ENCODE measurements at regions of chr11 and their contacts with region 1.

Region 1: DNA sequence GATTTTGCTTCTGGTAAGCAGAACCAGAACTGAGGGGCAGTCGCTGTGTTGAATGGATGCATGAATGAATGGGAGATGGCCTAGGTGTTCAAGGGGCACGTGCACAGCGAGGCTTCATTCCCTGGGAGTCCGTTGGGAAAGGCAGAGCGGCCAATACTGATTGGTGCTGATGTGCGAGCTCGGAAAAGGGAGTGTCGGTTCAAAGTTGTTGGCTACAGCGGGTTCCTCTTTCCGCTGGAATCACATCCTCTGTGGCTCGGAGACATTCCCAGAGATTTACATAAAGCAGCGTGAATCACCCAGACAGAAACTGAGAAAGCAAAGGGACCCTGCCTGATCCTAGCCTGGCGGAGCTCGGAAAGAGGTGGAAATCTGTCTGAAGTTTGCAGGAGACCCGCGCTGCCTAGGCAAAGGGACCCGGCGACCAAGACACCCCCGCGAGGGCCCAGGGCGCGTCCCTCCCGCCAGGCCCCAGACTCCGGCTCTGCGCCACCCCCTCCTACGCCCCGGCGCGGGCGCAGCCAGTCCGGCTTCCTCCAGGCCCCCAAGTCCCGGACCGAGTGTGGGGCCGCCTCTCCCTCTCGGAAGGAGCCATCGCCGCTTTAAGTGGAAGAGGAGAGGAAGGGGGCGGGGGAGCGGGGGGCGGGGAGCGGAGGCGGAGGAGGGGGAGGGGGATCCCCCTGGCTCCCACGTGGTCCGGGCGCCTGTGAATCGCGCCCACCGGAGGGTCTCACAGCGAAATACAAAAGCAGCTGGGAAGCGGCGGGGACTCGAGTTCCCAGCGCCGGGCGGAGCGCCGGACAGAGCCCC is at the start of gene FJX1:
- DNase-seq: no peak
- ATAC-seq: peak; percentile 36
- H3K4me3 ChIP-seq: peak within 1 kb of the TSS; percentile 56
- H3K27ac ChIP-seq: no peak within 1 kb of the TSS; the same call in 1 of the 2 replicates
- H3K4me1 ChIP-seq: peaks cover 8% of the 10 kb centered on the region; the same call in 1 of the 2 replicates
- H3K27me3 ChIP-seq: no peaks in the 10 kb centered on the region; a peak in 2 of 4 replicates
- CTCF ChIP-seq: no peak
- EP300 ChIP-seq: no peak
- POLR2A ChIP-seq: no peak
- RAD21 ChIP-seq: no peak
- polyA plus RNA-seq, gene FJX1: 4.2 to 10.6 TPM

Region 2: DNA sequence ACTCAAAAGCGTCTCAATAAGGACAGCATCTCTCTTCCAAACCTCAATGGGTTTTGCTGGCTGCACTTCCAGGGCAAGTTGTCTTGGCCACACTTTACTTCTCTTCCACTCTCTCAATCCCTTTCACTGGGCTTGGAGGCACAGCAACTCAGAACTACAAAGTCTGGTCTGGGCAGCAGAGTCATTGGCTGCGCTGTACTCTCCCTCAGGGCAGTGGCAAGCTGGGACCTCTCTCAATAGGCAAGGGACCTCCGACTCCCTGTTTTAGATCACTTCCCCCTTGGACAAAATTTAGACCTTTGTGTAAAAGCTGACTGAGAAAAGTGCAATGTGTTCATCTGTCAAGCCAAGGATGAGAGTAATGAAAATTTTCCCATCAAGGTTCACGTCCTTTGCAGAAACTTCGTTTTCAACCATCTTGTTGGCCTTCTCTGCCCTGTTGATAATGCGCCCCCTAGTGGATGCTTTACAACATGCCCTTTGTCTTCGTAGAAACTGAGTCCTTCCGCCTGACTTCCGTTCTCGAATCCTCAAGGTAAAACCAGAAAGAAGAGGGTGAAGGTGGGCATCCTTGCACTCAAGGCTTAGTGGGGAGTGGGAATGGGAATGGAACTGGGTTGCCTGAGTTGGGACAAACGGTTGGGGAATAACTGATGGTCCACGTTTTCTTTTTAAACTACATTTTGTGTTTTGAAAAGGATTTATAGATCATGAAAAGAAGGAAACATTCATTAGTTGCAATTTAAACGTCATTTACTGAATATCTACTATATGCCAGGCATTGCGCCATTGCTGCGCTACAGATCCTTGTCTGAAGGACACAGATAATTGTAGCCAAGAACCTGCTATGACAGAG is 379.8 kb before region 1 on chr11:
- CTCF ChIA-PET with region 1: no interaction called
- POLR2A ChIA-PET with region 1: no interaction called
- RAD21 ChIA-PET with region 1: no interaction called
- SMC1A ChIA-PET with region 1: no interaction called
- in situ Hi-C with region 1: no loop called
- intact Hi-C with region 1: no loop called
- DNase-seq: peak; percentile 35
- ATAC-seq: peak; percentile 70
- H3K4me3 ChIP-seq: no peak overlapping the region
- H3K27ac ChIP-seq: no peak overlapping the region
- H3K4me1 ChIP-seq: peaks cover 19% of the 10 kb centered on the region
- H3K27me3 ChIP-seq: no peaks in the 10 kb centered on the region
- CTCF ChIP-seq: peak; percentile 73 to 82 (median 82)
- EP300 ChIP-seq: no peak
- POLR2A ChIP-seq: no peak
- RAD21 ChIP-seq: peak; percentile 84

Region 3: GRCh38 chr11:35714882-35715627 is 97.2 kb after region 1 on chr11:
- CTCF ChIA-PET with region 1: interaction called, 3 read pairs
- POLR2A ChIA-PET with region 1: no interaction called
- RAD21 ChIA-PET with region 1: no interaction called
- SMC1A ChIA-PET with region 1: no interaction called
- in situ Hi-C with region 1: no loop called
- intact Hi-C with region 1: loop called (anchors 1 kb)
- DNase-seq: peak; percentile 77
- ATAC-seq: peak; percentile 91
- H3K4me3 ChIP-seq: no peak overlapping the region
- H3K27ac ChIP-seq: no peak overlapping the region; the same call in 1 of the 2 replicates
- H3K4me1 ChIP-seq: peaks cover 8% of the 10 kb centered on the region; the same call in 1 of the 2 replicates
- H3K27me3 ChIP-seq: no peaks in the 10 kb centered on the region
- CTCF ChIP-seq: no peak
- EP300 ChIP-seq: peak; percentile 47 to 55; a peak in 2 of 4 replicates
- POLR2A ChIP-seq: no peak
- RAD21 ChIP-seq: peak; percentile 13; the same call in 1 of the 2 replicates

Region 4: GRCh38 chr11:35943713-35944655 is 326.1 kb after region 1 on chr11 and contains the start of gene LDLRAD3:
- CTCF ChIA-PET with region 1: no interaction called
- POLR2A ChIA-PET with region 1: no interaction called
- RAD21 ChIA-PET with region 1: no interaction called
- SMC1A ChIA-PET with region 1: no interaction called
- in situ Hi-C with region 1: no loop called
- intact Hi-C with region 1: loop called (anchors 10 kb)
- DNase-seq: no peak
- ATAC-seq: peak; percentile 86
- H3K4me3 ChIP-seq: peak within 1 kb of the TSS; percentile 71; the same call in 1 of the 2 replicates
- H3K27ac ChIP-seq: no peak within 1 kb of the TSS
- H3K4me1 ChIP-seq: peaks cover 5% of the 10 kb centered on the region; the same call in 1 of the 2 replicates
- H3K27me3 ChIP-seq: peaks cover 0 to 10% of the 10 kb centered on the region in 2 experiments; a peak in 1 of 4 replicates
- CTCF ChIP-seq: no peak
- EP300 ChIP-seq: no peak
- POLR2A ChIP-seq: peak; percentile 55; the same call in 1 of the 2 replicates
- RAD21 ChIP-seq: no peak
- polyA plus RNA-seq, gene LDLRAD3: 2.5 to 3.1 TPM

Region 5: GRCh38 chr11:36073411-36074203 is 455.7 kb after region 1 on chr11:
- CTCF ChIA-PET with region 1: interaction called, 7 read pairs
- POLR2A ChIA-PET with region 1: no interaction called
- RAD21 ChIA-PET with region 1: interaction called, 3 read pairs
- SMC1A ChIA-PET with region 1: interaction called, 6 read pairs
- in situ Hi-C with region 1: no loop called
- intact Hi-C with region 1: loop called (anchors 5 kb)
- DNase-seq: no peak
- ATAC-seq: peak; percentile 41
- H3K4me3 ChIP-seq: no peak overlapping the region
- H3K27ac ChIP-seq: no peak overlapping the region
- H3K4me1 ChIP-seq: no peaks in the 10 kb centered on the region; the same call in 1 of the 2 replicates
- H3K27me3 ChIP-seq: no peaks in the 10 kb centered on the region
- CTCF ChIP-seq: no peak
- EP300 ChIP-seq: no peak
- POLR2A ChIP-seq: no peak
- RAD21 ChIP-seq: no peak

Region 6: DNA sequence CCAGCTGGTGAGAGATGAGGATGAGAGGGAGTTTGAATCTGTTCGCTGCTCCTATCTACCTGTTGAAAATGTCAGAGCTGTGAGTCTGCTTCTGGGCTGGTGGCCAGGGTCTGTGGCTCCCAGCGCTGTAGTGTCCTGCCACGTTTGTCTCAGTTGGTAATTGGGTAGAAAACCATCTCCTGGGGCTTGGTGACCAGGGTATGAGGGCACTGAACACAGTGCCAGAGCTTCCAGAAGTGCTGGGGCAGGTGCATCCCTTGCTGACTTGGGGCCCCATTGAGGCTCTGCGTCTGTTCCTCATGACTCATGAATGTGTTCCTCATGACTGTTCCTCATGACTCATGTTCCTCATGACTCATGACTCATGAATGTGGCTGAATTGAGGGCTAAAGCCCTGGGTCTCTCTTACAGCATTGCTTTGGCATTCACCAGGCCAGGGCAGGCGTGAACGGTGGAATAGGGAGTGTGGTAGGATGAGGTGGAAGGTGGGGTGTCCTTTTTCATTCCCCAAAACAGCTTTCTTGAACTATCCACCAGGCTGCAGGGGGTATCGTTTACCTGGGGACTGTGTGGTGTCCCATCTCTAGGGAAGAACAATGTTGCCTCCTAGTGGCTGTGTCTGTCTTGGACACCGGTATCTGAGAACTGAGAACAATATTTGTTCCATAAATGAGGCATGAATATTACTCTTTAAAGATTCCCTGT is 531.8 kb after region 1 on chr11:
- CTCF ChIA-PET with region 1: interaction called, 4 read pairs
- POLR2A ChIA-PET with region 1: no interaction called
- RAD21 ChIA-PET with region 1: no interaction called
- SMC1A ChIA-PET with region 1: interaction called, 3 read pairs
- in situ Hi-C with region 1: no loop called
- intact Hi-C with region 1: loop called (anchors 5 kb)
- DNase-seq: peak; percentile 31
- ATAC-seq: peak; percentile 90
- H3K4me3 ChIP-seq: no peak overlapping the region
- H3K27ac ChIP-seq: no peak overlapping the region
- H3K4me1 ChIP-seq: no peaks in the 10 kb centered on the region
- H3K27me3 ChIP-seq: no peaks in the 10 kb centered on the region
- CTCF ChIP-seq: peak; percentile 48 to 62 (median 61); a peak in 5 of 6 replicates
- EP300 ChIP-seq: peak; percentile 36 to 43; a peak in 1 of 4 replicates
- POLR2A ChIP-seq: no peak
- RAD21 ChIP-seq: peak; percentile 72

Region 7: DNA sequence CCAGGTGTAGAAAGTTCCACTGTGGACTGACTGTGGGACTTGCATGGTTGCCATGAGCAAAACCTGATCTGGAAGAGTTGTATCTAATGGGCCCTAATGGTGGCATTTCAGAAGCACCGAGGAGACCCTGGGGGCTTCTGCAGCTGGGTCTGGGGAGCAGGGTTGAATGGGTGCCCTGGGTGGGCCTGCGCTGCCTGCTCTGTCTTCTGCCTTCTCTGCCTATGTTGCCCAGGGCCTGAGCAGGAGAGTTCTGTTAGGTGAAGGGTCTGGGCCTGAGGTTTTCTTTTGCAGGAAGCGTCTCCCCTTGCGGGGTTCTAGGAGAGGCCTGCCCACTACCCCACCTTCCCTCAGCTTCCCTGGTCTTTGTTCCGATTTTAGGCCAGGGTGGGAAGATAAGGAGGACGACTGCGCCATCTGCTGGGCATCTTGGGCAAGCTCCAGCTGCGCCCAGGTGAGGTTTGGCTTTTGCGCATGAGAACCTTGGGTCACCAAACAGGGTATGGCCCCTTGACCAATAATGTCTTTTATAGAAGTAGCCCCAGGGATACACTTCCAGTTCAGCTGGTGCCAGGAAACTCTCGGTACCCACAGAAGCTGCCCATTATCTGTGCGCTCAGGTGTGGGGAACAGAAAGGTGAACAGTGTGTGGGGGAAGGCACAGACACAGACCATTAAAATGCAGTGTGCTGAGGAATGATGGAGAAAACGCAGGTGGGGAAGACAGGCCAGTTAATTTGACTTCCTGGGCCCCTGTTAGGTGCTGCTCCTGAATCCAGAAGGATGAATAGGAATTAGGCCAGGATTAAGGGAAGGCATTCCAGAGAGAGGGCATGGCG is 648.1 kb after region 1 on chr11:
- CTCF ChIA-PET with region 1: interaction called, 21 read pairs
- POLR2A ChIA-PET with region 1: no interaction called
- RAD21 ChIA-PET with region 1: interaction called, 3 read pairs
- SMC1A ChIA-PET with region 1: interaction called, 18 read pairs
- in situ Hi-C with region 1: loop called (anchors 5 kb)
- intact Hi-C with region 1: loop called (anchors 1 kb)
- DNase-seq: no peak
- ATAC-seq: peak; percentile 95
- H3K4me3 ChIP-seq: no peak overlapping the region
- H3K27ac ChIP-seq: no peak overlapping the region
- H3K4me1 ChIP-seq: no peaks in the 10 kb centered on the region
- H3K27me3 ChIP-seq: no peaks in the 10 kb centered on the region
- CTCF ChIP-seq: peak; percentile 89 to 93 (median 92)
- EP300 ChIP-seq: no peak
- POLR2A ChIP-seq: no peak
- RAD21 ChIP-seq: peak; percentile 91